Vagina (tissue), 2 donors: ENCODE measurements at regions of chr3 and their contacts with region 1.

Region 1: GRCh38 chr3:188262913-188263683 is 109.1 kb downstream of the LPP start:
- DNase-seq: no peak
- H3K4me3 ChIP-seq: no peak overlapping the region
- H3K27ac ChIP-seq: peak overlapping the region; percentile 86
- H3K4me1 ChIP-seq: peaks cover 63% of the 10 kb centered on the region
- H3K27me3 ChIP-seq: no peaks in the 10 kb centered on the region
- CTCF ChIP-seq: no peak
- POLR2A ChIP-seq: no peak

Region 2: DNA sequence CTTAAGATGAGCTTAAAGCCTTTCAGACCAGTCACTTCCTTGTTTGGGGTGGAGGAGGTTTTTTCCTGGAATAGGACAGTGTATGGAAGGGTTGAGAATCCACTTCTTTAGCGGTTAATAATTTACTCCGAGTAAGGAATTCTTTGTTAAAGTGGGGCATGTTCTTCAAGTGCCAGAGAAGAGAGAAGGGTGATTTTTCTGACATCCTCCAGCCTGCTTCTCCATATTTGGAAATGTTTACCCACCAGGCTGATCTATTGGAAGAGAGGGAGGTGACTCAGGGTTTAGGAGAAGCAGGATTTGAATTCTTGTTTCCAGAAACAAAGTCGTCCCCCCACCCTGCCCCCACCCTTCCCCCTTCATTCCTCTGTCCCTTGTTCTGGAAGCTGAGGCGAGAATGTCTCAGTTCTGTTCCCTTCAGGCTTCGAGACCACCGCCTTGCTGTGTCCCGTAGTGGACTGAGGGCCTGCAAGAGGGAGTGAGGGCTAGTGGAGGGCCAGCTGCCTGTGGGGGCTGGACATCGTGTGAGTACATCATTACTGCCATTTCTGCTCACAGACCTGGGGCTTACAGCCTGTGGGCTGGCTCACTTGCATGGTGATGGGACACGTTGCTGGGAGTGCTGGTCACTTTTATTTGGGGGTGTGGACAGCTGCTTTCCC is 50.7 kb before region 1 on chr3:
- intact Hi-C with region 1: loop called (anchors 10 kb)
- DNase-seq: no peak
- H3K4me3 ChIP-seq: peak overlapping the region; percentile 29 to 39
- H3K27ac ChIP-seq: peak overlapping the region; percentile 80
- H3K4me1 ChIP-seq: peaks cover 29% of the 10 kb centered on the region
- H3K27me3 ChIP-seq: no peaks in the 10 kb centered on the region
- CTCF ChIP-seq: no peak
- POLR2A ChIP-seq: no peak